HEK293 (cell line): ENCODE measurements at regions of chr18 and their contacts with region 1.

Region 1: GRCh38 chr18:21997207-21998143 is 171.9 kb upstream of the GATA6 start:
- H3K4me3 ChIP-seq: no peak overlapping the region
- H3K27ac ChIP-seq: no peak overlapping the region
- H3K4me1 ChIP-seq: peaks cover 2% of the 10 kb centered on the region
- CTCF ChIP-seq: no peak

Region 2: DNA sequence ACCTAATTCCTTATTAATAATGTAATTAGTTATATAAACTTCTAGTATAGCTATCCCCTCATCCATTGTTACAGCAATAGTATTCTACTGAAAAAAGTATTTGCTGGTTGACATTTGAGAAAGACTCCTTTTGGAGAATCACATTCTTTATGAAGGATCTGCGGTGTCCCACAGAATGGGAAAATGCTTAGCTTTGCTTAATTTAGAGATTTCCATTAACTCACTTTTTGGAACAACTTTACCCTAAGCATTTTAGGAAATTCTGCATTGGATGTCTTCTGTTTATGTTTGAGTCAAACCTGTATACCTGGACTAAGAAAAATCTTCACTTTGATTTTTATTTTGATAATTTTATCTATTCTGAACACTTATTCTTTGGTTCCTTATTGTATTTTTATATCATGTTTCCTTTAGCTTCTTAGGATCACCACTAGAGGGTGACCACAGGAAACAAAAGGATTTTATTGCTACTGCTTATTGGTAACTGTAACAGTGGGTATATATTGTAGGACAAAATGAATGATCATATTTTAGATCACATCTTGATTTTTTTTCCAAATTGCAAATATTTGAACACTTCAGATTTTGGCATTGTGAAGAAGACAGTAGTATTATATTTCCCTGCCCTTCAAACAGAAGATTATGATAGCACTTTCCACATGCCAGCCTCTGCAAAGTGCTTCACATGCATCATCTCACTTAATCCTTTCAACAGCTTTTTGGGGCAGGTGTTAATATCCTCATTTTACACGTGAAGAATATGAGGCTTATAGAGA is 177.3 kb before region 1 on chr18:
- CTCF ChIA-PET with region 1: no interaction called
- POLR2A ChIA-PET with region 1: no interaction called
- H3K4me3 ChIP-seq: no peak overlapping the region
- H3K27ac ChIP-seq: no peak overlapping the region
- H3K4me1 ChIP-seq: no peaks in the 10 kb centered on the region
- CTCF ChIP-seq: no peak

Region 3: DNA sequence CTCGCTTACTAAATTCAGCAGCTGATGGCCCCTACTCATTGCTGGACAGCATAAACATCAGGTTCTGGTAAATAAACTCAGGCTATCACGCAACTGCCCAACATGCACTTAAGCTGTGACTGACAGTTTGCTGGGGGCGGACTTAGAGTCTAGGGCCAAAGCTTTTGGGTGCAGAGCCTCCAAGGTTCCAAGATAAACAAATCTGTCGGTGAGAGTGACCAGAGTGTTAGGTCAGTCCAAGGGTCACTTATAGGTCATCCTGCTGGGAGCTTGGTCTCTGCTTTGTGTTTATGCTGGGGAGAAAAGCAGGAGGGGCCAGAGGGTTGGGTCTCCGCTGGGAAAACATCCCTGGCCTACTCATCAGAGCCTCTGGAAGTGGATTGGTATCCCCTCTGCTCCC is 16.7 kb before region 1 on chr18:
- CTCF ChIA-PET with region 1: interaction called, 18 read pairs
- POLR2A ChIA-PET with region 1: interaction called, 3 read pairs
- H3K4me3 ChIP-seq: no peak overlapping the region
- H3K27ac ChIP-seq: no peak overlapping the region
- H3K4me1 ChIP-seq: no peaks in the 10 kb centered on the region
- CTCF ChIP-seq: no peak

Region 4: DNA sequence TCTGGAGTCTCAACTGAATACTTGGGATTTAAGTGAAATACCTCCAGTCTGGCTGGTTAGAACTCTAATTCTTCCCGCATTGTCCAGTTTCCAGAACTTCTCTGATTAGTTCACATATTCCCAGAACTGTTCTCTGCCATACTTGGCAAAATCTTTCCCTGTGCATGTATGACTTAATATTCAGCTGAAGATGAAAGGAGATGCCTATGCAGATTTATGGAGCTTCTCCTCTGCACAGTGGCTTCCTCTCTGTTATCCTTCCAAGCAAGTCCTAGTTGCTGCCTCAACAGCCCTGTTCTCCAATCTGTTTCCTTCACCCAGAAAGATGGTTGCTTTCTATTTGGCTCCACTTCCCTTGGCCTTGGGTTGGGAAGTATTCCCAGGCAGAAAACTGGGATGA is 16.5 kb after region 1 on chr18:
- CTCF ChIA-PET with region 1: interaction called, 26 read pairs
- POLR2A ChIA-PET with region 1: interaction called, 5 read pairs
- H3K4me3 ChIP-seq: no peak overlapping the region
- H3K27ac ChIP-seq: no peak overlapping the region
- H3K4me1 ChIP-seq: no peaks in the 10 kb centered on the region
- CTCF ChIP-seq: no peak

Region 5: DNA sequence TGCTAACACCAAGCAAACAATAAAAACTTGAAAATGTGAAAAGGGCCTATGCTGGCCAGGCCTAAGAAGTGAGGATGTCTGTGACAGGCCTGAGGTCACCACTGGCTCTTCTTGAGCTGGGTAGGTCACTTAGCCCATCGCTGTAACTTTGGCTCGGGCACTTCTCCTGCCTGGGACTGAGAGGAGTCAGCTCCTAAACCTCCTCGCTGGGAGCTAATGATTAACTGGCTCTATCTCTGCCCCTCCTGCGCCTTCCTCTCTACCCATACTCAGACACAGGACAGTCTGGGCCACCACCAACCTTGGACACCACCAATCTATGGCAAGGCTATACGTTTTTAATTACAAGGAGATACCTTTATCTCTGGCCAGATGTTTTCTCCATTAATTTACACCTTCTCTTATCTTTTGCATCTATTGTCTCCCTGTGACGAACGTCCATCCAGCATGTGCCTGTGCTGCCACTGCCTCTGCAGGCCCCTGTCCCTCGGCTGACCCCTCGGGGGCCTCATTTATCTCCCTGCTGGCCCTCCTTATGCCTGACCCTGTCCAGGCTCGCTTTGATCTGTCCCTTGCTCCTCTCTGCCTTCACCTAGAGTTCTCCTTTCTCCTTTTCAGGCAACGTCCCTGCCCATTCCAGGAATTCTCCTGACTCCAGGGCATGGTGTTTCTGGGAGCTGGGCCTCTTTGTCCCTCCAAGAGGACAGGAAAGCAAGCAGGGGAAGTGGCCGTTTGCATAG is 22.8 kb after region 1 on chr18:
- CTCF ChIA-PET with region 1: interaction called, 10 read pairs
- POLR2A ChIA-PET with region 1: no interaction called
- H3K4me3 ChIP-seq: no peak overlapping the region
- H3K27ac ChIP-seq: no peak overlapping the region
- H3K4me1 ChIP-seq: no peaks in the 10 kb centered on the region
- CTCF ChIP-seq: no peak

Region 6: DNA sequence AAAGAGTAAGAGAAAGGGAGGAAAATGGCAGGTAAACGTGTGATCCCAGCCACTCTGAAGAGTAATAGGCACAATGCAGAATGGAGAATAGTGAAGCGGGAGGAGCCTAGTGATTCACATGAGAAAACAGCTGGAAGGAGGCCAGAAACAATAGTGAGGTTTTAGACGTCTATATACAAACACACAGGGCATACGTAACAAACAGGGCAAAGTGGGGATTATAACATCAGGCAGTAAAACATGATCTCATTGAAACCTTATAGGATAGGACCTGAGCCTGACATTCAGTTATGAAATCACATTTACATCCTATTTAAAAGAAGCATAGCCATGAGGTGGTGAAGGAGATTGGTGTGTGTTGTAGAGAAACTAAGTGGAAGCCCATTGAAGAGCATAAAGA is 138.9 kb after region 1 on chr18:
- CTCF ChIA-PET with region 1: interaction called, 11 read pairs
- POLR2A ChIA-PET with region 1: interaction called, 3 read pairs
- H3K4me3 ChIP-seq: no peak overlapping the region
- H3K27ac ChIP-seq: peak overlapping the region; percentile 26; the same call in 1 of the 2 replicates
- H3K4me1 ChIP-seq: peaks cover 9% of the 10 kb centered on the region
- CTCF ChIP-seq: no peak

Region 7: DNA sequence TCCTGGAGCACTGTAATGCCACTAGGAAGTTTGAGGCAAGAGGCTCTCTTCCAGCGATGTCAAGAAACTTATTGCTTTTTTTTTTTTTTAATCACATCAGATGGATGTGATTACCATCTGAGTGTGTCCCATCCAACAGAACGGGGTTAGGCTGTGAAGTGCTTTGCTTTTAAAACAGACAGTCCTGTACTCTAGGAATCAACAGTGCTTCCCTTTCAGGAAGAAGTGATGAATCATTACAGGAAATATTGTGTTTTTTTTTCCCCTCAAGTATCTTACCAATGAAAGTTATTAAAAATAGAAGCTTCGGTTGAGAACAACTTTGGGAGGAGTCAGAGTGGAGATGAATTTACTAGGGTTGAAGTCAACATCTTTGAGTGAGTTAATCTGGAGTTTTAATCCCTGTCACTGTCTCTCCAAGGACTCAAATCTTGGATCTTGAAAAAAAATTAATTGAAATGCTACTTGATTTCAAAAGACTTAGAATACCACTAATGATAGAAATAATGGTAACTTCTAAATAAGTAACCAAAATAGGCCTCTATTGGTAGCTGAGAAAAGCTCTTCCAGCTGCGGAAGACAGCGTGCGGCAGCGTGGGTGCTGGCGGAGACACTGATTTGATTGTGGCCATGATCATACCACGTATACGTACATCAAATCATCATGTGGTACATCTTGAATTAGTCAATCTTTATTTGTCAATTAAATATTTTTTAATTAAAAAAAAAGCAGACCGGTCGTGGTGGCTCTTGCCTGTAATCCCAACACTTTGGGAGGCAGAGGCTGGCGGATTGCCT is 217.5 kb after region 1 on chr18:
- CTCF ChIA-PET with region 1: no interaction called
- POLR2A ChIA-PET with region 1: no interaction called
- H3K4me3 ChIP-seq: no peak overlapping the region
- H3K27ac ChIP-seq: no peak overlapping the region
- H3K4me1 ChIP-seq: no peaks in the 10 kb centered on the region
- CTCF ChIP-seq: no peak

Region 8: DNA sequence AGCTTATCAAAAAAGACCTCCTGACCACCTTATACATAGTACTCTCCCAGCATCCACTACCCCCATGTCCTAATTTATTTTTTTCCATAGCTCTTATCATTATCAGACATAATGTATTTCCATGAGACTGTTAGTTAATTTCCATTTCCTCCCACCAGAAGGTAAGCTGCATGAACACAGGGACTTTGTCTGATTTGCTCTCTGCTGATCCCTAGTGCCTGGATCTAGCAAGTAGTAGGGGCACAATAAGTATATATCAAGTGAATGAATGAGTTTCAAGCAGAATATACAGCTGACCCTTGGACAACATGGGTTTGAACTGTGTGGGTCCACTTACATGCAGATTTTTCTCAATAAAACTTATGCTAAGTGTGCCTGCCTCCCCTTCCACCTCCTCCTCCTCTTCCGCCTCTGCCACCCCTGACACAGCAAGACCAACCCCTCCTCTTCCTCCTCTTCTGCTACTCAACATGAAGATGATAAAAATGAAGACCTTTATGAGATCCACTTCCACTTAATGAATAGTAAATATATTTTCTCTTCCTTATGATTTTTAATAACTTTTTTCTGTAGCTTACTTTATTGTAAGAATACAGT is 366.5 kb after region 1 on chr18:
- CTCF ChIA-PET with region 1: no interaction called
- POLR2A ChIA-PET with region 1: no interaction called
- H3K4me3 ChIP-seq: no peak overlapping the region
- H3K27ac ChIP-seq: no peak overlapping the region
- H3K4me1 ChIP-seq: no peaks in the 10 kb centered on the region
- CTCF ChIP-seq: peak; percentile 55